ENCODE measurements at regions of chr9 and their contacts with region 1.

Region 1: GRCh38 chr9:128370826-128371621 is at the start of gene URM1:
- DNase-seq: peak; percentile 97 to 98 (median 98)
- ATAC-seq: peak; percentile 98
- H3K4me3 ChIP-seq: peak within 1 kb of the TSS; percentile 77
- H3K27ac ChIP-seq: peak within 1 kb of the TSS; percentile 96
- H3K4me1 ChIP-seq: peaks cover 4% of the 10 kb centered on the region
- H3K27me3 ChIP-seq: no peaks in the 10 kb centered on the region
- total RNA-seq, gene URM1: 46.5 to 57.4 (median 52.7) TPM

Region 2: DNA sequence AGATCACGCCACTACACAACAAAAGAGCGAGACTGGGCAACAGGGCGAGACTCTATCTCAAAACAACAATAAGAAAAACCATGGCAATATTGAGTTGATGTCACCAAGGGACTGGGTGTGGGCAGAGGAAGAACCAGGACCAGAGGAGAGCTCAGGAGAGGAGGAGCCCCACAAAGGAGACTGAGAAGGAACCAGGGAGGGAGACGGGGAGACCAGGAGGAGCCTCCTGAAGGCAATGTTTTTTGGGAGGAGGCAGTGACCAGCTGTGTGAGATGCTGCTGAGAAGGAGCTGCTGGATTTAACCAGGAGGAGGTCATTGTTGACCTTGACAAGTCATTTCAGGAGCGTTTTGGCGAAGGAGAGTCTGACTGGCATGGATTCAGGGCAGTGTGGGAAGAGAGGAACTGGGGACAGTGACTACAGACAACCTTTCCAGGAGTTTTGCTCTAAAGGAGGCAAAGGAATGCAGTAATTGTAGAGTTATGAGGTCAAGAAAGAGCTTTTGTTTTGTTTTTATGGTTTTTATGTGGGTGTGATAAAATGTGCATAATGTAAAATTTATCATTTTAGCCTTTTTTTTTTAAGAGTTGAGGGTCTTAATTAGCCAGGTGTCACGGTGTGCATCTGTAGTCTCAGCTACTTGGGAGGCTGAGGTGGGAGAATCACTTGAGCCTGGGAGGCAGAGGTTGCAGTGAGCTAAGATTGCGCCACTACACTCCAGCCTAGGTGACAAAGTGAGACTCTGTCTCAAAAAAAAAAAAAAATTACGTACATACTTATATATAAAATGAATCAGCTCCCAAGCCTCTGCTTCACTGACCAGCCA is 66.7 kb before region 1 on chr9:
- intact Hi-C with region 1: no loop called
- DNase-seq: no peak
- ATAC-seq: peak in 1 of 2 donors; percentile 8
- H3K4me3 ChIP-seq: no peak overlapping the region
- H3K27ac ChIP-seq: no peak overlapping the region
- H3K4me1 ChIP-seq: no peaks in the 10 kb centered on the region
- H3K27me3 ChIP-seq: no peaks in the 10 kb centered on the region

Region 3: GRCh38 chr9:128316421-128316820 is 54.6 kb before region 1 on chr9:
- intact Hi-C with region 1: no loop called
- DNase-seq: no peak
- ATAC-seq: no peak
- H3K4me3 ChIP-seq: no peak overlapping the region
- H3K27ac ChIP-seq: no peak overlapping the region
- H3K4me1 ChIP-seq: no peaks in the 10 kb centered on the region
- H3K27me3 ChIP-seq: no peaks in the 10 kb centered on the region

Region 4: DNA sequence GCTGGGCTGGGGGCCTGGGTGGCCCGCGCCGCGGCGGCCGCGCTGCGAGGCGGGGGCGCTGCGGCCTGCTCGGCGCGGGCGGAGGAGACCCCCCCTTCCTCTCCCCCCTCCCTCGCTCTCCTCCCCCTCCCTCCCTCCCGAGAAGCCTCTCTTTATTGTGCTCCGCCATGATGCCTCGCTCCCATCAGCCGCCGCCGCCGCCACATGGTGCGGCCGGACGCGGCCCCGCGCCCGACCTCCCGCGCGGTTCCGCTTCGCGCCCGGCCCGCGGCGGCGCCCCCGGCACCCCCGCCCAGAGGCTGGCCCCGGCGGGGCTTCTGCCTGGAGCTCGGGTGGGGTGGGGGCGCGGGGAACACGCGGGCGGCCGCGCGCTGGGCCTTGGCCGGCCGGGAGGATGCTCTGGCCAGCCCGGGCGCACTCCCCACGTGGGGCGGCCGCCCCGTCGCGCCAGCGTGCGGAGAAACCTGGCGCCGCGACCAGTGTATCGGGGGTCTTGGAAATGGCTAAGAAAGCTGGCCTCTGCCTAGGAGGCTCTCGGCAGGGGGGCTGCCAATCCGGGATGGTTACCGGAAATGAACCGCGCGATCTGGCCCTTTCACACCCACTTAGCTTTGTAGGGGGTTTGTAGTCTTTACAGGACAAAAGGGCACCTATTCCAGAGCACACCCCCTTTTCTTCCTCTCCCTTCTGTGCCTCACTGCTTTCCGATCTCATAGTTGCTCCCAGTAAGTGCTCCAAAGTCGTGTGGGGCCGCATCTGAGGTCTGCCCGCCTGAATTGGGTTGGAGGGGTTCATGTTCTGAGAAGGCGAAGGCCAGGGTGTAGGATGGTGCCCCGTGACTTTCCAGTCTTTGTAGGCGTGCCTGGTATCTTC is 319.0 kb after region 1 on chr9:
- intact Hi-C with region 1: loop called in 1 of 4 experiments (anchors 10 kb)
- DNase-seq: peak; percentile 39 to 73 (median 71)
- ATAC-seq: no peak
- H3K4me3 ChIP-seq: peak overlapping the region; percentile 99
- H3K27ac ChIP-seq: no peak overlapping the region
- H3K4me1 ChIP-seq: no peaks in the 10 kb centered on the region
- H3K27me3 ChIP-seq: no peaks in the 10 kb centered on the region

Measured in right cardiac atrium (tissue), 5 donors.